HepG2 (cell line): ENCODE measurements at regions of chr17 and their contacts with region 1.

Region 1: GRCh38 chr17:43024407-43025289 is at the start of gene RND2:
- DNase-seq: peak; percentile 91
- ATAC-seq: peak; percentile 48
- H3K4me3 ChIP-seq: peak within 1 kb of the TSS; percentile 27 to 62 (median 45); a peak in 5 of 6 replicates
- H3K27ac ChIP-seq: no peak within 1 kb of the TSS
- H3K4me1 ChIP-seq: peaks cover 61% of the 10 kb centered on the region
- H3K27me3 ChIP-seq: no peaks in the 10 kb centered on the region; a peak in 1 of 5 replicates
- CTCF ChIP-seq: peak; percentile 96
- EP300 ChIP-seq: peak in 1 of 2 experiments; percentile 54; a peak in 2 of 4 replicates
- POLR2A ChIP-seq: no peak
- RAD21 ChIP-seq: peak; percentile 96
- total RNA-seq, gene RND2: 0.11 TPM in 2 replicates

Region 2: DNA sequence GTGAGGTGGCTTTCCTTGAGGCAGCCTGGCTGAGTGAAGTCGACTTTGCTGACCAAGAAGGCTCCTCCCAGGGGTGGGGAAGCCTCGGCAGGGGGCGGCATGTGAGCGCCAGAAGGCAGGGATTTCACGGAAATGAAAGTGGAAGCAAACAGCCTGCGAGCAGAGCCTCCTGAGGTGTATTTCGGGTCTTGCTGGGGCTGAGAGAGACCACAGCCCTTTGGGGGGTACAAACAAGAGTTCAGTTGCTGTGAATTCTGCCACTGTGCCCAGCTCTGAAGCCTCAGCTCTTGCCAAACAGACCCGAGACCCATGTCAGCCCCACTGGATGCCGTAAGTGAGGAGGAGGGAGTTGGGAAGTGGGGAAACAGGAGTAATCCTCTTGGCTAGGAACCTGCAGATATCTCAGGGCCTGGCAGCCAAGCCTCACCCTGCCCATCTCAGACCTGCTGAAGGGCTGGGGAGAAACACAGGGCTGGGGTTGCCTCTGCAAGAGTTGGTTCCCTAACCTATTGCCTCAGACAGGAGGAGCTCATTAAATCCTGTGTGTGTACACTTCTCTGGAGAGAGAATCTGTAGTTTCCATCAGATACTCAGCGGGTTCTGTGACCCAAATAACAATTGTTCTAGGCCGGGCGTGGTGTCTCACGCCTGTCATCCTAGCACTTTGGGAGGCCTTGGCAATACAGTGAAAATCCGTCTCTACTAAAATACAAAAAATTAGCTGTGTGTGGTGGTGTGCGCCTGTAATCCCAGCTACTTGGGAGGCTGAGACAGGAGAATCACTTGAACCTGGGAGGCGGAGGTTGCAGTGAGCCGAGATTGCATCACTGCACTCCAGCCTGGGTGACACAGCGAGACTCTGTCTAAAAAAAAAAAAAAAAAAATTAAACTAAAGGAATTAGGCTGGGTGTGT is 17.8 kb before region 1 on chr17 and contains the start of gene IFI35:
- CTCF ChIA-PET with region 1: no interaction called
- POLR2A ChIA-PET with region 1: interaction called, 55 read pairs
- in situ Hi-C with region 1: no loop called
- intact Hi-C with region 1: loop called (anchors 1 kb)
- DNase-seq: peak; percentile 83
- ATAC-seq: peak; percentile 78
- H3K4me3 ChIP-seq: peak within 1 kb of the TSS; percentile 71 to 92 (median 88)
- H3K27ac ChIP-seq: peak within 1 kb of the TSS; percentile 92
- H3K4me1 ChIP-seq: peaks cover 81% of the 10 kb centered on the region
- H3K27me3 ChIP-seq: no peaks in the 10 kb centered on the region; a peak in 1 of 5 replicates
- CTCF ChIP-seq: peak; percentile 97
- EP300 ChIP-seq: no peak
- POLR2A ChIP-seq: peak; percentile 75 to 76
- RAD21 ChIP-seq: peak; percentile 88
- total RNA-seq, gene IFI35: 38.1 and 40.2 TPM in 2 replicates

Region 3: GRCh38 chr17:43118679-43119615 is 94.3 kb after region 1 on chr17:
- CTCF ChIA-PET with region 1: no interaction called
- POLR2A ChIA-PET with region 1: interaction called, 4 read pairs
- in situ Hi-C with region 1: no loop called
- intact Hi-C with region 1: loop called (anchors 2 kb)
- DNase-seq: peak; percentile 65
- ATAC-seq: peak; percentile 68
- H3K4me3 ChIP-seq: no peak overlapping the region
- H3K27ac ChIP-seq: peak overlapping the region; percentile 42
- H3K4me1 ChIP-seq: peaks cover 68% of the 10 kb centered on the region
- H3K27me3 ChIP-seq: no peaks in the 10 kb centered on the region
- CTCF ChIP-seq: no peak
- EP300 ChIP-seq: no peak
- POLR2A ChIP-seq: no peak
- RAD21 ChIP-seq: no peak

Region 4: GRCh38 chr17:43170766-43171585 is 146.3 kb after region 1 on chr17 and contains the start of gene NBR1:
- CTCF ChIA-PET with region 1: interaction called, 3 read pairs
- POLR2A ChIA-PET with region 1: interaction called, 13 read pairs
- in situ Hi-C with region 1: no loop called
- intact Hi-C with region 1: loop called (anchors 2 kb)
- DNase-seq: peak; percentile 99
- ATAC-seq: peak; percentile 90
- H3K4me3 ChIP-seq: peak within 1 kb of the TSS; percentile 62 to 94 (median 75)
- H3K27ac ChIP-seq: peak within 1 kb of the TSS; percentile 90
- H3K4me1 ChIP-seq: peaks cover 69% of the 10 kb centered on the region
- H3K27me3 ChIP-seq: no peaks in the 10 kb centered on the region; a peak in 1 of 5 replicates
- CTCF ChIP-seq: peak; percentile 79
- EP300 ChIP-seq: peak in 1 of 2 experiments; percentile 43; a peak in 2 of 4 replicates
- POLR2A ChIP-seq: peak; percentile 76 to 89
- RAD21 ChIP-seq: peak; percentile 68
- total RNA-seq, gene NBR1: 51.7 and 79.0 TPM in 2 replicates

Region 5: DNA sequence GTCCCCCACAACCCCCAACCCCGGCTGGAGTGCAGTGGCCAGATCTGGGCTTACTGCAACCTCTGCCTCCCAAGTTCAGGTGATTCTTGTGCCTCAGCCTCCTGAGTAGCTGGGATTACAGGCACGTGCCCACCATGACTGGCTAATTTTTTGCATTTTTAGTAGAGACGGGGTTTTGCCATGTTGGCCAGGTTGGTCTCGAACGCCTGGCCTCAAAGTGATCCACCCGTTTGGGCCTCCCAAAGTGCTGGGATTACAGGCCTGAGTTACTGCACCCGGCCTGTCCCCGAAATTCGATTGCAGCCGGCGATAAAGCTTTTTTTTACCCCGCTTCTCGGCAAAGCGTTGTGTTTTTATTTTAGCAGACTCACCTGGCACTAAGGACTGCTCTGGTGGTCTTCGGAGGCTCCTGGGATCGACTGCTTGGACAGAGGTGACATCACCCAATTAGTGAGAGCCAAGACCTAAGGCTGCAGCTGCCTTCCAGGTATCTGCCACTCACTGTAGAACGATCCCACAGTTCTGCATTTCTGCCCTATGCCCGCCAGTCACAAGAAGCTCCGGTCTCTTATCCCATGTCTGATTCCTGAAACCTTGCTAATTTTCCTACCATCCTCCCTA is 292.0 kb after region 1 on chr17:
- CTCF ChIA-PET with region 1: no interaction called
- POLR2A ChIA-PET with region 1: interaction called, 16 read pairs
- in situ Hi-C with region 1: no loop called
- intact Hi-C with region 1: no loop called
- DNase-seq: no peak
- ATAC-seq: no peak
- H3K4me3 ChIP-seq: no peak overlapping the region; a peak in 1 of 6 replicates
- H3K27ac ChIP-seq: no peak overlapping the region
- H3K4me1 ChIP-seq: peaks cover 20% of the 10 kb centered on the region
- H3K27me3 ChIP-seq: 0 out of 5 replicates have a peak, but pooled peaks cover 0 to 2% of the 10 kb centered on the region in 2 experiments
- CTCF ChIP-seq: no peak
- EP300 ChIP-seq: no peak
- POLR2A ChIP-seq: no peak
- RAD21 ChIP-seq: no peak